H1 (cell line): ENCODE measurements at regions of chr1 and their contacts with region 1.

Region 1: DNA sequence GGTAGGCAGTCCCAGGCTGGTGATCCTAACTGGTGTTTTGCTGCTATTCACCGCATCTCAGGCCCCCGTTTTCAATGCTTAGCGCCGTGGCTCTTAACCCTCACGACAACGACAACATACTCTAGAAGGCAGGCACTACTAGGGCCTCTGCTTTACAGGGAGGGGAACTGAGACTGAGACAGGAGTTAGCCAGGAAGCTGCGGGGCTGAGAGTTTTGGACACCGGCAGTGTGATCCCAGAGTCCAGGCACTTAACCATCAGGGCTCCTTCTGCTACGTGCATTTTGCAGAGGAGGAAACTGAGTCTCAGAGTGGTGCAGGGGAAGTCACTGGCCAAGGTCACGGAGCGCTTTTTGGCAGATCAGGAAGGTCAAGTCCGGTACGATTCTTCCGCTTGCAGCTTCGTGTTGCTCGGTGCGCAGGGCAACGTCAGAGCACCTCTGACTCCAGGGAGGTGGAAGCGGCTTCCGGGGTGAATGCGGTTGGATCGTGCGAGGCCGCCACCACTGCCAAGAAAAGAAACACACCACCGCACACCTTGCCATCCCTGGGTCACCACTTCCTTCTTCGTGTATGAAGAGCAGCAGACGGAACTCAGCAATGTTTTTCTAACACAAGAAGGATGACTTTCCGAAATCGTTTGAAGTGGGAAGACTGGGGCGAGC is 300.3 kb downstream of the RRAGC start:
- DNase-seq: no peak
- H3K4me3 ChIP-seq: peak overlapping the region; percentile 29 to 50 (median 36); a peak in 7 of 8 replicates
- H3K27ac ChIP-seq: no peak overlapping the region
- H3K4me1 ChIP-seq: peaks cover 14 to 22% (median 16%) of the 10 kb centered on the region in 4 experiments
- H3K27me3 ChIP-seq: peaks cover 0 to 10% (median 8%) of the 10 kb centered on the region in 4 experiments; a peak in 4 of 7 replicates
- CTCF ChIP-seq: no peak
- EP300 ChIP-seq: no peak
- POLR2A ChIP-seq: no peak
- RAD21 ChIP-seq: no peak

Region 2: DNA sequence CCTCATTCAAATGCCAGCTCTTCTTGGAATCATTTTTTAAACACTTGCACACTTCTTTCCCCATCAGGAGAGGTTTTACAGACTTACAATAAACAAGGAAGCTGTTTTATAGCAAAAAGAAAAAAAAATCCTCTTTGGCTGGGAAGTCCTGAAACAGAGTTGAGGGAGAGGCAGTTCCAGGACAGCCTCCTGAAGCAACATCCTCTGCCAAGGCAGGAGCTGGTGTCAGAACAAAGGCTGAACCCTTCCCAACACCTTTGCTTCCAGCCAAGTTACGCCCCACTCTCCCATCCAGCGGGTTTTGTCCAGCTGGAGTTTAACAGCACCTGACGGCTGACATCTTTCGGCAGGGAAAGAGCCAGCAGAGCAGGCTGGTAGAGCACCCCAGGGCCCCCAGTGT is 12.4 kb after region 1 on chr1:
- CTCF ChIA-PET with region 1: interaction called, 12 read pairs
- POLR2A ChIA-PET with region 1: no interaction called
- DNase-seq: no peak
- H3K4me3 ChIP-seq: no peak overlapping the region
- H3K27ac ChIP-seq: no peak overlapping the region
- H3K4me1 ChIP-seq: peaks cover 0 to 6% (median 4%) of the 10 kb centered on the region in 4 experiments; a peak in 3 of 7 replicates
- H3K27me3 ChIP-seq: peaks cover 0 to under 1% (median 0%) of the 10 kb centered on the region in 4 experiments; a peak in 2 of 7 replicates
- CTCF ChIP-seq: no peak
- EP300 ChIP-seq: no peak
- POLR2A ChIP-seq: no peak
- RAD21 ChIP-seq: no peak